WTC11 (cell line): ENCODE measurements at regions of chr9 and their contacts with region 1.

Region 1: GRCh38 chr9:110623462-110624025 is 44.0 kb upstream of the SVEP1 start:
- DNase-seq: no peak
- ATAC-seq: peak; percentile 56
- H3K4me3 Mint-ChIP-seq: no peak overlapping the region
- H3K27ac Mint-ChIP-seq: no peak overlapping the region
- H3K4me1 Mint-ChIP-seq: peaks cover 10% of the 10 kb centered on the region
- H3K27me3 Mint-ChIP-seq: no peaks in the 10 kb centered on the region
- CTCF ChIP-seq: peak; percentile 59

Region 2: GRCh38 chr9:110183208-110184145 is 440.1 kb before region 1 on chr9:
- CTCF ChIA-PET with region 1: interaction called, 21 read pairs
- POLR2A ChIA-PET with region 1: no interaction called
- DNase-seq: peak; percentile 71
- ATAC-seq: peak; percentile 81
- H3K4me3 Mint-ChIP-seq: no peak overlapping the region
- H3K27ac Mint-ChIP-seq: no peak overlapping the region
- H3K4me1 Mint-ChIP-seq: peaks cover 11% of the 10 kb centered on the region
- H3K27me3 Mint-ChIP-seq: no peaks in the 10 kb centered on the region; the same call in 1 of the 2 replicates
- CTCF ChIP-seq: peak; percentile 69

Region 3: GRCh38 chr9:110427497-110428104 is 195.9 kb before region 1 on chr9:
- CTCF ChIA-PET with region 1: interaction called, 22 read pairs
- POLR2A ChIA-PET with region 1: no interaction called
- DNase-seq: peak; percentile 77
- ATAC-seq: peak; percentile 94
- H3K4me3 Mint-ChIP-seq: no peak overlapping the region
- H3K27ac Mint-ChIP-seq: no peak overlapping the region
- H3K4me1 Mint-ChIP-seq: no peaks in the 10 kb centered on the region
- H3K27me3 Mint-ChIP-seq: no peaks in the 10 kb centered on the region
- CTCF ChIP-seq: 0 out of 2 replicates have a peak, but pooled peaks have one; percentile 29

Region 4: GRCh38 chr9:110452227-110452801 is 171.2 kb before region 1 on chr9:
- CTCF ChIA-PET with region 1: interaction called, 11 read pairs
- POLR2A ChIA-PET with region 1: no interaction called
- DNase-seq: no peak
- ATAC-seq: no peak
- H3K4me3 Mint-ChIP-seq: no peak overlapping the region
- H3K27ac Mint-ChIP-seq: no peak overlapping the region
- H3K4me1 Mint-ChIP-seq: no peaks in the 10 kb centered on the region
- H3K27me3 Mint-ChIP-seq: no peaks in the 10 kb centered on the region; the same call in 1 of the 2 replicates
- CTCF ChIP-seq: peak; percentile 21; the same call in 1 of the 2 replicates